ENCODE measurements at regions of chr12 and their contacts with region 1.

Region 1: GRCh38 chr12:108691175-108691997 is 39.9 kb downstream of the CORO1C start:
- DNase-seq: peak; percentile 33 to 83 (median 38)
- H3K4me3 ChIP-seq: peak overlapping the region in 1 of 2 donors; percentile 56
- H3K4me3 Mint-ChIP-seq: peak overlapping the region; percentile 48 to 85 (median 78)
- H3K27ac ChIP-seq: peak overlapping the region; percentile 27
- H3K27ac Mint-ChIP-seq: peak overlapping the region; percentile 77 to 90 (median 86)
- H3K4me1 ChIP-seq: peaks cover 46% of the 10 kb centered on the region
- H3K4me1 Mint-ChIP-seq: peaks cover 37 to 66% (median 54%) of the 10 kb centered on the region in 4 donors
- H3K27me3 ChIP-seq: no peaks in the 10 kb centered on the region
- H3K27me3 Mint-ChIP-seq: no peaks in the 10 kb centered on the region

Region 2: GRCh38 chr12:108731105-108731865 is 39.9 kb after region 1 on chr12 and contains the start of gene CORO1C:
- CTCF ChIA-PET with region 1: interaction called, 3 read pairs
- POLR2A ChIA-PET with region 1: interaction called, 5 read pairs
- intact Hi-C with region 1: loop called (anchors 1 kb)
- DNase-seq: peak; percentile 94 to 97 (median 95)
- H3K4me3 ChIP-seq: peak within 1 kb of the TSS; percentile 88 to 91
- H3K4me3 Mint-ChIP-seq: peak within 1 kb of the TSS; percentile 89 to 97 (median 95)
- H3K27ac ChIP-seq: peak within 1 kb of the TSS; percentile 69
- H3K27ac Mint-ChIP-seq: peak within 1 kb of the TSS; percentile 92 to 99 (median 98)
- H3K4me1 ChIP-seq: peaks cover 5% of the 10 kb centered on the region
- H3K4me1 Mint-ChIP-seq: peaks cover 11 to 28% (median 26%) of the 10 kb centered on the region in 4 donors
- H3K27me3 ChIP-seq: no peaks in the 10 kb centered on the region
- H3K27me3 Mint-ChIP-seq: no peaks in the 10 kb centered on the region
- total RNA-seq, gene CORO1C: 10.3 to 11.9 TPM